RWPE1 (cell line): ENCODE measurements at regions of chr6 and their contacts with region 1.

Region 1: GRCh38 chr6:33787954-33788693 is 806 bp downstream of the LEMD2 start:
- DNase-seq: peak; percentile 77
- H3K27ac ChIP-seq: peak overlapping the region; percentile 92
- CTCF ChIP-seq: no peak

Region 2: DNA sequence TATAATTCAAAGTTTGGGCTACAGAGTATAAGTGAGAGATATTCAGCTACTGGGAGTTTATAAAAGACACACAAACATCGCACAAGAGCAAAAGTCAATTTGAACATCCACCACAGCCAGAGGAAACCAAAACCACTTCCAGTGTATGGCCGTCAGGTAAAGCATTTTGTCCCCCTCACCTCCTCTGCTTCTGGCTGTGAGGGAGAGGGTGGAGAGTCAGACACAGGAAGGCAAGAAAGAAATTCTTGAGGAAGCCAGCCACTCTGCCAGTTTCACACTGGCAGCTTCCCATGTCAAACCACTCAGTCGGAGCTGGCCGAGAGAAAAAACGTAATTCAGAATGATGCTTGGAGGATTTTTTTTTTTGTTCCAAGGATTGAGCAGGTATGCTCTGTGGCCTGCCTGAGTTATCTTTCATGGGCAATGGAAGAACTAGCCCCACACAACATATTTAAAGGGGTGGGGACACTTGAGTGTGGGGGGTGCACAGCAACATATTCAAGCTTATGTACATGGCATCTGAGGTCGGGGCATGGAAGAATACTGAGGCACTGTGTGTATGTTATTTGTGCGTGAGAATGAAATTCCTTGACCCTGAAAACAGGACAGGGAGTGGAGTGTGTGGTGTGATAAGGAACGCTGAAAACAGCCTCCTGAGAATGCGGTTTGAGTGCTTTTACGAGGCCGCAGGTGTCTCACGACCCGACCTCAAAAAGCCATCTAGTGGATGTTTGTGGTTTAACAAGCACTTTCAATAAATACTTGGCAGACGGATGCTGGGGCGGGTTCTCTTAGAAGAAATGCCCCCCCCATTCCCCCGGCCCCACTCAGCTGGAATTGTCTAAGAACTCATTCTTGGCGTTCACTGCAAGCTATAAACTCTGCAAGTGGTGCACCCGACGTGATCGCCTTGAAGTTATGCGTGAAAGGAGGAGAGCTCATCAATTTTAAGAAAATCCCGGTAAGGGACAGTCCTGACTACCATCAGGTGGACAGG is 443.1 kb before region 1 on chr6:
- CTCF ChIA-PET with region 1: no interaction called
- POLR2A ChIA-PET with region 1: no interaction called
- DNase-seq: peak; percentile 60
- H3K27ac ChIP-seq: no peak overlapping the region
- CTCF ChIP-seq: peak; percentile 79

Region 3: GRCh38 chr6:33535104-33535603 is 253.0 kb before region 1 on chr6:
- CTCF ChIA-PET with region 1: no interaction called
- POLR2A ChIA-PET with region 1: no interaction called
- DNase-seq: no peak
- H3K27ac ChIP-seq: no peak overlapping the region
- CTCF ChIP-seq: no peak

Region 4: DNA sequence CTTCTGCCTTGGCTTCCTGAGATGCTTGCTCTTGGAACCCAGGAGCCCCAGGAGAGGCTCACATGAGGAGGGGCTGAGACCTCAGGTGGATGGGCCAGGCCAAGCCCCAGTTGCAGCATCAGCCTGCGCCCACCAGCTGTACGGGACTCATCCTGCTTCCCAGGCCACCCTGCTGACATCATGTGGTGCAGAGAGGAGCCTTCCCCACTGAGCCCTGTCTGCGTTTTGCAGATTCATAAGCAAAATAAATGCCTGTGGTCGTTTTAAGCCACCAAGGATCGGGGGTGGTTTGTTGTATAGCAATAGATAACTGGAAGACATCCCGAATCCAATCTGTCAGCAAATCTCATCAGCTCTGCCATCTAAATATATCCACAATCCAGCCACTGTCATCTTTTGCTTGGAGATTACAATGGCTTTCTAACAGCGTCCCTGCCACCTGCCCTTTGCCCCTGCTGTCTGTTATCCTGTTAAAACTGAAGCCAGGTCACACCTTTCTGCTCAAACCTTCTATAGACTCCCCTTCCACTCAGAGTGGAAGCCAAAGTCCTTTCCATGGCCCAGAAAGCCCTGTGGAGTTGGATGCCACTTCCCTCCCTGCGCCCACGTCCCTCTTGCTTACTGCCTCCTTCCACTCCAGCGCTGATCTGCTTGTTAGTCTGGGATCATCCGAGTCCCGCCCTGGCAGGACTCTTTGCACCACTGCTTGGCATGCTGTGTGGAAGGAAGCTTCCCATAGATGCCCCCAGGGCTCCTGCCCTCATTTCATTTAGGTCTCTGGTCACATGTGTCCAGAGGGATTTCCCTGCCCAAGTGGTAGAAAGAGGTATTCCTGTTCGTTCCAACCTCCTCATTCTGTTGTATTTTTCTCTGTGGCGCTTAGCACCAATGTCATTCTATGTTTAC is 39.7 kb after region 1 on chr6:
- CTCF ChIA-PET with region 1: no interaction called
- POLR2A ChIA-PET with region 1: interaction called, 11 read pairs
- DNase-seq: no peak
- H3K27ac ChIP-seq: no peak overlapping the region
- CTCF ChIP-seq: no peak